Lower leg skin (tissue), 4 donors: ENCODE measurements at regions of chr5 and their contacts with region 1.

Region 1: GRCh38 chr5:27472000-27472763 is 433.8 kb upstream of the CDH9 start:
- DNase-seq: no peak
- H3K4me3 ChIP-seq: no peak overlapping the region
- CTCF ChIP-seq: no peak
- POLR2A ChIP-seq: no peak

Region 2: DNA sequence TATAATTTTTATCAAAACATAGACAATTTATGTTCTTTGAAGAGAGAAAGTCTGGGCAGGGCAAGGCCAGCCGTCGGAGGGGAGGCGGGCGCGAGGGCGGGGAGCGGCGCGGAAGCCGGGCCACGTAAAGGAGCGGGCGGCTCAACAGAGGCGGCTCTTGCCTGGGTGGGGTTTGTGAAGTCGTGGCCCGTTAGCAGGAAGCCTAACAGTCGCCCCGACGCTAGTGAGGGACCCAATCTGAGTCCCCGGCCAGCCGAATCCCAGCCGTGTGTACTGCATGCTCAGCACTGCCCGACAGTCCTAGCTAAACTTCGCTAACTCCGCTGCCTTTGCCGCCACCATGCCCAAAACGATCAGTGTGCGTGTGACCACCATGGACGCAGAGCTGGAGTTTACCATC is 1563.0 kb before region 1 on chr5:
- intact Hi-C with region 1: no loop called
- DNase-seq: no peak
- H3K4me3 ChIP-seq: no peak overlapping the region
- CTCF ChIP-seq: no peak
- POLR2A ChIP-seq: no peak

Region 3: DNA sequence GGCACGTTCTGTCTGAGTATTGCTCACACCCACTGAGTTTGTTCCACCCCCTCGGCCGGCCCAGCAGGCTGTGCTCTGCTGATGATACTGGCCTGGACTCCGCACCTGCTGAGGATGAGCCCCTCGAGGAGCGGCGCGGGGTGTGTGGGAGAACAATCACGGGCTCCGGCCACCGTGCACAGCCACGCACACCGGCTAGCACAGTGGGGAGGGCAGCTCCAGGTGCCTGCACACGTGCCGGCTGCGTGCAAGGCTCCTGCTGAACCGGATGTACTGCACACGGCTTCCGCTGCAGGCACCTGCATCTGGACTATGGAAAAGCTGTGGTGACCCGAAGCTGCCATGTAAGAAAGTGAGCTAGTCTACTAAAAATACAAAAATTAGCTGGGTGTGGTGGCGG is 51.4 kb after region 1 on chr5:
- intact Hi-C with region 1: loop called (anchors 2 kb)
- DNase-seq: no peak
- H3K4me3 ChIP-seq: no peak overlapping the region
- CTCF ChIP-seq: no peak
- POLR2A ChIP-seq: no peak

Region 4: GRCh38 chr5:27612161-27612560 is 140.0 kb after region 1 on chr5:
- intact Hi-C with region 1: no loop called
- DNase-seq: no peak
- H3K4me3 ChIP-seq: no peak overlapping the region
- CTCF ChIP-seq: no peak
- POLR2A ChIP-seq: no peak

Region 5: DNA sequence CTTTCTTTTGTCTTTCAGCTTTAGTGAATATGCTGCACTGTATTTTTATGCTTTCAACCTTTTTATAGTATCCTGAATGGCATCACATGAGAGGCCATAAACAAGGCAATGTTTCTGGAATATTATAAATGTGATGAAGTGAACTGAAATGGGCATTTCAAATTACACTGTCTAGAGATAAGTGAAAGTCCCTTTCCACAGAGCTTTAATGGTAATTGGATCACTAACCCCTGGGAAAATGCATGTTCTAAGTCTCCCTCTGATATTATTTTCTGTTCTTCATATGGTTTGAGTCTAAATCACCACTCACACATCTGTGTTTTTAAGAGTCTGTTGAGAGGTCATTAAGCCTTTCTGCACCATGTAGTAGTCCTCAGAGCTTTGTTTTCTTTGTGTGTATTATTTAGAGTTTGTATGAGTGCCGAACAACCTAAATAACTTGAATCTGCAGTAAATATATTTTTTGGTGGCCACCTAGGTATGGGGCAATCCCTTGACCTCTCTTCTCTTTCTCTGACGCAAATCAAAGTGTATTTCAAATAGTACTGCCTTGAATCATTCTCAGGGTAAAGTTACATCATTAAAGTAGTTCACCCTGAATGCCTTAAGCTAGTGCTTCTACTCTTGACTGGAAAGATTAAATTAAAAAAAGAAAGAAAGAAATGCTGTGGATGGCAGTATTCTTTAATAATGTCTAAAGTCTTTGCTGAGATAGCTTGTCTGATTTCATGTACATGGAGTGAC is 1790.3 kb after region 1 on chr5:
- intact Hi-C with region 1: no loop called
- DNase-seq: no peak
- H3K4me3 ChIP-seq: no peak overlapping the region
- CTCF ChIP-seq: no peak
- POLR2A ChIP-seq: no peak